Dendritic cell treated with granulocyte-macrophage colony-stimulating factor and Interleukin-4, amounts not matched to agents 40 ng/mL and 50 ng/mL, for 4 days (primary cell): ENCODE measurements at regions of chr20 and their contacts with region 1.

Region 1: DNA sequence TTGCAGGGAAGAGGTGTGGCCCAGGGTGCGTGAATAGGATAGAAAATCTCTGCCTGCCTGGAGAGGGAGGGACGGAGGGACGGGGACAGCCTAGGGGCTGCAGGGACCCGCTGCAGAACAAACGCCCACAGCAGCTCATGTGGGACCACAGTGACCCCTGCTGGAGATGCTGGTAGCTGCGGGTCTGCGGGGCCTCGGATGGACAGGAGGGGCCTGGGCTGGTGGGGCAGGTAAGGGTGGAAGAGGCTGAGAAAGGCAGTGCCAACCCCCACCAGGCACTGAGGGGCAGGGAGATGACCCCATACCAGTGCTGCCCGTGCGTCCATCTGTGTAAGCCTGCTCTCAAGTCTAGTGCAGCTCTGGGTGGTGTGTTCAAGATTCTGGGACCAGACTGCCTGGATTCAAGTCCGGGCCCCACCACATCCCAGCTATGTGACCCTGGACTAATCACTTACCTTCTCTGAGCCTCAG is 39.4 kb downstream of the KIAA1755 start:
- H3K4me3 Mint-ChIP-seq: no peak overlapping the region
- H3K27ac Mint-ChIP-seq: no peak overlapping the region
- H3K4me1 Mint-ChIP-seq: peaks cover 67% of the 10 kb centered on the region
- H3K27me3 Mint-ChIP-seq: peaks cover 6% of the 10 kb centered on the region

Region 2: GRCh38 chr20:37880726-37881591 is 340.2 kb before region 1 on chr20:
- intact Hi-C with region 1: no loop called
- H3K4me3 Mint-ChIP-seq: no peak overlapping the region
- H3K27ac Mint-ChIP-seq: no peak overlapping the region
- H3K4me1 Mint-ChIP-seq: no peaks in the 10 kb centered on the region
- H3K27me3 Mint-ChIP-seq: peaks cover 2% of the 10 kb centered on the region

Region 3: GRCh38 chr20:38057351-38057972 is 163.7 kb before region 1 on chr20:
- intact Hi-C with region 1: loop called (anchors 1 kb)
- H3K4me3 Mint-ChIP-seq: no peak overlapping the region
- H3K27ac Mint-ChIP-seq: no peak overlapping the region
- H3K4me1 Mint-ChIP-seq: no peaks in the 10 kb centered on the region
- H3K27me3 Mint-ChIP-seq: no peaks in the 10 kb centered on the region

Region 4: DNA sequence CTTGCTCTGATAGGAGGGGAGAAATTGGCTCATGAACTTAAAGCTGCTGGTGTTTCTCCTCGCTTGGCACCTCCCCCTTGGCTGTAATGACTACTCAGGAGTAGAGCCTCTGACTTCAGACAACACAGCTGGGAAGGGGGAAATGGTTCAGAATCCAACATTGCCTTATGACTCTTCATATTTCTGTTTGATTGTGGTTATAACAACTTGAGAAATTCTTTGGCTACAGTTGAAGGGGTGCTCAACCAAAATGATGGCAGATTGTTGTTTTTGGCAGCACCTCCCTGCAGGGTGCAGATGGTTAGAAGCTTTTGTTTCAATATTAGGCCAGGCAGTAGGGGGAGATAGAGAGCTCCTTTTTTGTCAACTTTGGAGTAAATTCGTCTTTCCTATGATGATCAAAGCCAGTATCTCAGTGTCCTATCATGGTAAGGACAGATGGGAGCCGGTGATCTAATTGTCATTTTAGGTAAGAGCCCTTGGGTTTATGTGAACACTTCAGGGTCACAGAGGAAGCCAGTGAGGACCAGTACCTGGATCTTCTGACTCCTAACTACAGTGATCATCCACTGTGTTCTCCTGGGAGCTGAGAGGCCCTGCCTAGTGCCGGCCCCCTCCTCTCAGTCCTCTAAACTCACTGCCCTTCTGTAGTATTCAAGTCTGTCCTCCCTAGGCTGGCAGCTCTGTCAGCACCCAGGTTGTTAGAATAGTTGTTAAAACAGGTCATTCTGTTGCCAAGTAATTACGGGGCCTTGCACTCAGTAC is 147.7 kb before region 1 on chr20:
- intact Hi-C with region 1: loop called (anchors 2 kb)
- H3K4me3 Mint-ChIP-seq: no peak overlapping the region
- H3K27ac Mint-ChIP-seq: peak overlapping the region; percentile 13
- H3K4me1 Mint-ChIP-seq: peaks cover 5% of the 10 kb centered on the region
- H3K27me3 Mint-ChIP-seq: no peaks in the 10 kb centered on the region

Region 5: GRCh38 chr20:38113401-38114325 is 107.5 kb before region 1 on chr20:
- intact Hi-C with region 1: loop called (anchors 1 kb)
- H3K4me3 Mint-ChIP-seq: peak overlapping the region; percentile 18
- H3K27ac Mint-ChIP-seq: peak overlapping the region; percentile 40
- H3K4me1 Mint-ChIP-seq: peaks cover 39% of the 10 kb centered on the region
- H3K27me3 Mint-ChIP-seq: no peaks in the 10 kb centered on the region

Region 6: DNA sequence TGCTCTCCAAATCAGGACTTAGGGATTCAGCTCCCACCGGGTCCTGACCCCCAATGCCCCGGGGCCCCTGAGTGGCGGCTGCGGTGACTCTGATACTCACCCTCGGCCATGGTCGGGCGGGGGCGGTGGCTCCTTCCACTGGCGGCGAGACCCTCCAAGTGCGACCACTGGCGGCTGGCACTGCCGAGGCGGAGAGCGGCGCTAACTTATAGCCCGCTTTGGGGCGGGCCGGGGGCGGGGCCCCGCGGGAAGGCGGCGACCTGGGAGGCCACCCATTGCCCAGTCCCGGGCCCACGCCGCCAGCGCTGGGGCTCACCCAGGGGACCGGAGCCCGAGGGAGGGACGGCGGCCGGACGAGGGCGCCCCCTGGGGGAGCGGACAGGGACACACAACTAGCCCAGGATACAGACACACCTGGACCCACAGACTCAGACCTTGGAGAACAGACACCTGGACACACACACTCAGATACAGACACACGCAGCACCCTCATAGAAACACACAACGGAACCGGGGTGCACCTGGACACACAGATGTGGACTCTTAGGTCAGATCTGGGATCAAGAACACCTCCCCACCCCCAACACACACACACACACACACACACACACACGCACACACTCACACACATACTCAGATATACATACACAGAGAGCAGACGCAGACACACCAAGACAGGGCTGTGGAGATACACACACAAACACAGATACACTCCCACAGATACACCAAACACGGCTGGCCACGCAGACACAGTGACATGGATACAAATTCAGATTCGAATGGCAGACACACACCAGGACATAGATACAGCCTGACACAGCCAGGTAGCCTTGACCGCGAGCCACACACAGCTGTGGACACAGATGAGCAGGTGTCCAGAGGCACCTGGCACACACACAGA is 55.8 kb before region 1 on chr20 and contains the start of gene TGM2:
- intact Hi-C with region 1: loop called (anchors 2 kb)
- H3K4me3 Mint-ChIP-seq: peak within 1 kb of the TSS; percentile 68
- H3K27ac Mint-ChIP-seq: peak within 1 kb of the TSS; percentile 54
- H3K4me1 Mint-ChIP-seq: peaks cover 78% of the 10 kb centered on the region
- H3K27me3 Mint-ChIP-seq: no peaks in the 10 kb centered on the region

Region 7: DNA sequence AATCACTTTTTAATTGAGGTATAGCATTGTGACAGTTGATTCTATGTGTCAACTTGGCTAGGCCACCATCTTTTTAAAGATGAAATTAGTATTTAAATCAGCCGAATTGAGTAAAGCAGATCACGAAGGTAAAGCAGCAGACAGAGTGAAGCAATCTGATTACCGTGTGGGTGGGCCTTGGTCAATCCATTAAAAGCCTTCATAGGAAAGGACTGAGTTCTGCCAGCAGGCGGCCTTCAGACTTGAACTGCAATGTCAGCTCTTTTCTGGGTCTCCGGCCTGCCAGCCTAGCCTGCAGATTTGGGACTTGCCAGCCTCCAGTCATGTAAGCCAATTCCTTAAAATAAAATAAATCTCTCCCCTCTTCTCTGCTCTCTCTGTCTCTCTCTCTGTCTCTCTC is 33.6 kb before region 1 on chr20:
- intact Hi-C with region 1: loop called (anchors 5 kb)
- H3K4me3 Mint-ChIP-seq: no peak overlapping the region
- H3K27ac Mint-ChIP-seq: peak overlapping the region; percentile 52
- H3K4me1 Mint-ChIP-seq: peaks cover 29% of the 10 kb centered on the region
- H3K27me3 Mint-ChIP-seq: peaks cover 6% of the 10 kb centered on the region